ENCODE measurements at regions of chr16 and their contacts with region 1.

Region 1: GRCh38 chr16:66899945-66900710 is 18.6 kb downstream of the CDH16 start:
- DNase-seq: peak; percentile 81 to 98
- ATAC-seq: peak; percentile 55 to 58
- H3K4me3 ChIP-seq: peak overlapping the region in 3 of 4 donors; percentile 7 to 13 (median 11)
- H3K27ac ChIP-seq: peak overlapping the region; percentile 85 to 98 (median 96)
- H3K4me1 ChIP-seq: peaks cover 61 to 71% of the 10 kb centered on the region in 2 donors
- H3K27me3 ChIP-seq: no peaks in the 10 kb centered on the region
- CTCF ChIP-seq: no peak
- POLR2A ChIP-seq: peak; percentile 32 to 60

Region 2: GRCh38 chr16:66918803-66919568 is 18.9 kb after region 1 on chr16 and contains the start of gene CDH16:
- in situ Hi-C with region 1: no loop called
- intact Hi-C with region 1: no loop called
- DNase-seq: peak in 1 of 2 donors; percentile 76
- ATAC-seq: peak; percentile 37 to 46
- H3K4me3 ChIP-seq: no peak within 1 kb of the TSS
- H3K27ac ChIP-seq: peak within 1 kb of the TSS; percentile 91 to 99 (median 96)
- H3K4me1 ChIP-seq: peaks cover 33 to 47% of the 10 kb centered on the region in 2 donors
- H3K27me3 ChIP-seq: no peaks in the 10 kb centered on the region
- CTCF ChIP-seq: no peak
- POLR2A ChIP-seq: peak; percentile 20 to 37
- total RNA-seq, gene CDH16: 0.10 to 0.87 (median 0.16) TPM in 3 of 4 donors, not detected in the other

Region 3: GRCh38 chr16:66947302-66948065 is 47.4 kb after region 1 on chr16:
- in situ Hi-C with region 1: no loop called
- intact Hi-C with region 1: loop called (anchors 1 kb)
- DNase-seq: peak; percentile 68 to 86
- ATAC-seq: peak; percentile 62 to 64
- H3K4me3 ChIP-seq: peak overlapping the region; percentile 74 to 90 (median 82)
- H3K27ac ChIP-seq: peak overlapping the region; percentile 97 to 99 (median 97)
- H3K4me1 ChIP-seq: peaks cover 21 to 35% of the 10 kb centered on the region in 2 donors
- H3K27me3 ChIP-seq: no peaks in the 10 kb centered on the region
- CTCF ChIP-seq: peak; percentile 83 to 96 (median 93)
- POLR2A ChIP-seq: peak; percentile 87 to 90

Region 4: GRCh38 chr16:67017810-67018488 is 117.8 kb after region 1 on chr16:
- in situ Hi-C with region 1: no loop called
- intact Hi-C with region 1: no loop called
- DNase-seq: peak; percentile 52 to 82
- ATAC-seq: peak; percentile 79 to 92
- H3K4me3 ChIP-seq: no peak overlapping the region
- H3K27ac ChIP-seq: no peak overlapping the region
- H3K4me1 ChIP-seq: peaks cover 5 to 7% of the 10 kb centered on the region in 2 donors
- H3K27me3 ChIP-seq: no peaks in the 10 kb centered on the region
- CTCF ChIP-seq: peak; percentile 64 to 85 (median 75)
- POLR2A ChIP-seq: no peak